Activated CD8-positive, alpha-beta T cell treated with anti-CD3 and anti-CD28 coated beads for 36 hours (primary cell): ENCODE measurements at regions of chr2 and their contacts with region 1.

Region 1: GRCh38 chr2:54106631-54107454 is 8.6 kb upstream of the ACYP2 start:
- DNase-seq: peak; percentile 64
- ATAC-seq: peak; percentile 69
- H3K4me3 Mint-ChIP-seq: no peak overlapping the region
- H3K27ac Mint-ChIP-seq: no peak overlapping the region
- H3K4me1 Mint-ChIP-seq: peaks cover 7% of the 10 kb centered on the region
- H3K27me3 Mint-ChIP-seq: peaks cover 2% of the 10 kb centered on the region
- CTCF ChIP-seq: peak; percentile 68

Region 2: DNA sequence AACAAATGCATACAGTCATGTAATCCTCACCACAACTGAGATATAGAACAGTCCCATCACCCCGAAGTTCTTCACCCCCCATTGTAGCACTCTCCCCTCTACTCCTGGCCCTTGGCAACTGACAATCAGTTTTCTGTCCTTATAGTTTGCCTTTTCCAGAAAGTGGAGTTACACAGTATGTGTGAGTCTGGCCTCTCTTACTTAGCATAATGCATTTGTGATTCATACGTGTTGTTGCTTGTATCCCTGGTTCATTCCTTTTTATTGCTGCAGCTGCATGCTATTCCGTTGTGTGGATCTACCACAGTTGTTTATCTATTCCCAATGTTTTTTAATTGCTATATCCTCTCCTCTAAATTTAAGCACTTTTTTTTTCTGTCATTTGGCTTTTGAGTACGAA is 26.2 kb after region 1 on chr2:
- CTCF ChIA-PET with region 1: no interaction called
- POLR2A ChIA-PET with region 1: no interaction called
- intact Hi-C with region 1: no loop called
- DNase-seq: no peak
- ATAC-seq: no peak
- H3K4me3 Mint-ChIP-seq: no peak overlapping the region
- H3K27ac Mint-ChIP-seq: no peak overlapping the region
- H3K4me1 Mint-ChIP-seq: no peaks in the 10 kb centered on the region
- H3K27me3 Mint-ChIP-seq: no peaks in the 10 kb centered on the region
- CTCF ChIP-seq: no peak

Region 3: GRCh38 chr2:54176577-54176976 is 69.7 kb after region 1 on chr2:
- CTCF ChIA-PET with region 1: interaction called, 10 read pairs
- POLR2A ChIA-PET with region 1: no interaction called
- intact Hi-C with region 1: no loop called
- DNase-seq: peak; percentile 19
- ATAC-seq: no peak
- H3K4me3 Mint-ChIP-seq: no peak overlapping the region
- H3K27ac Mint-ChIP-seq: no peak overlapping the region
- H3K4me1 Mint-ChIP-seq: no peaks in the 10 kb centered on the region
- H3K27me3 Mint-ChIP-seq: no peaks in the 10 kb centered on the region
- CTCF ChIP-seq: no peak

Region 4: DNA sequence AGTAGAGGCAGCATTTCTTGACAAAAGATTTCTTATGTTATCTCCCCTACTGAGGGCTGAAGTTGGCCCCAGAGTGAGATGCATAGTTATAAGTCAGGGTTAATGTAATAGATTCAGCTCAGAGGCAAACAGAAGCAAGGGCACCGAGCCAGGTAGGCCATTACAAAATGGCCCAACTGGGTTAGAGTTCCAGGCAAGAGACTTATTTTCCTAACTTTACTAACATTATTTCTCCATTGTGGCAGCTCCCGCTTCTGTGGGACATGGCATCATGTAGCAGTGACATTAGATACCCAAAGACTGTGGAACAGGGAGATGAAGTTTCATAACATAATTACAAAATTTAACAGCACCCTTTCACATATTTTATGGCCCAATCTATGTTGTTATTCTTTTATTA is 122.1 kb after region 1 on chr2:
- CTCF ChIA-PET with region 1: no interaction called
- POLR2A ChIA-PET with region 1: no interaction called
- intact Hi-C with region 1: no loop called
- DNase-seq: no peak
- ATAC-seq: no peak
- H3K4me3 Mint-ChIP-seq: no peak overlapping the region
- H3K27ac Mint-ChIP-seq: no peak overlapping the region
- H3K4me1 Mint-ChIP-seq: peaks cover 2% of the 10 kb centered on the region
- H3K27me3 Mint-ChIP-seq: no peaks in the 10 kb centered on the region
- CTCF ChIP-seq: no peak

Region 5: DNA sequence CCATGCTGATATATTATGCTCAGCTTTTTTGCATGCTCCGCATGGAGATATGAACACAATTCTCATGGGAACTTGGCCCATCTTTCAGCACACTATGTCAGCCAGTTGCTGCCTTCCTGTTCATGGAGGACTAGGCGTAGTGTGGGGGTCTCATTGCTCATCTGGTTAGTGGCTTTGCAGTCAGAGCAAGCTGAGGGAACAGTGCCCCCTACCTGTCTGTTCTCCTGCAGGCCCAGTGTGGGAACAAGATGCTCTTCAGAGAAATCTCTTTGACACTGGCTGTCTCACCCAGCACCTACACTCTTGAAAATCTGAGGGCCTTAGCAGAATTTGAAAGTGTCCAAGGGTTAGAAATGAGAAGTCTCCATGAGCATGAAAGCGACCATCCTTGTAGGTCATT is 396.3 kb after region 1 on chr2:
- CTCF ChIA-PET with region 1: interaction called, 34 read pairs
- POLR2A ChIA-PET with region 1: no interaction called
- intact Hi-C with region 1: loop called (anchors 5 kb)
- DNase-seq: peak; percentile 68
- ATAC-seq: peak; percentile 65
- H3K4me3 Mint-ChIP-seq: no peak overlapping the region
- H3K27ac Mint-ChIP-seq: no peak overlapping the region
- H3K4me1 Mint-ChIP-seq: no peaks in the 10 kb centered on the region
- H3K27me3 Mint-ChIP-seq: peaks cover 3% of the 10 kb centered on the region
- CTCF ChIP-seq: peak; percentile 54